Activated CD4-positive, alpha-beta memory T cell treated with anti-CD3 and anti-CD28 coated beads for 36 hours (primary cell): ENCODE measurements at regions of chr5 and their contacts with region 1.

Region 1: GRCh38 chr5:173238312-173239232 is 3.6 kb upstream of the NKX2-5 start:
- DNase-seq: no peak
- H3K4me3 Mint-ChIP-seq: peak overlapping the region; percentile 31
- H3K27ac Mint-ChIP-seq: no peak overlapping the region
- H3K4me1 Mint-ChIP-seq: peaks cover 41% of the 10 kb centered on the region
- H3K27me3 Mint-ChIP-seq: peaks cover 88% of the 10 kb centered on the region

Region 2: DNA sequence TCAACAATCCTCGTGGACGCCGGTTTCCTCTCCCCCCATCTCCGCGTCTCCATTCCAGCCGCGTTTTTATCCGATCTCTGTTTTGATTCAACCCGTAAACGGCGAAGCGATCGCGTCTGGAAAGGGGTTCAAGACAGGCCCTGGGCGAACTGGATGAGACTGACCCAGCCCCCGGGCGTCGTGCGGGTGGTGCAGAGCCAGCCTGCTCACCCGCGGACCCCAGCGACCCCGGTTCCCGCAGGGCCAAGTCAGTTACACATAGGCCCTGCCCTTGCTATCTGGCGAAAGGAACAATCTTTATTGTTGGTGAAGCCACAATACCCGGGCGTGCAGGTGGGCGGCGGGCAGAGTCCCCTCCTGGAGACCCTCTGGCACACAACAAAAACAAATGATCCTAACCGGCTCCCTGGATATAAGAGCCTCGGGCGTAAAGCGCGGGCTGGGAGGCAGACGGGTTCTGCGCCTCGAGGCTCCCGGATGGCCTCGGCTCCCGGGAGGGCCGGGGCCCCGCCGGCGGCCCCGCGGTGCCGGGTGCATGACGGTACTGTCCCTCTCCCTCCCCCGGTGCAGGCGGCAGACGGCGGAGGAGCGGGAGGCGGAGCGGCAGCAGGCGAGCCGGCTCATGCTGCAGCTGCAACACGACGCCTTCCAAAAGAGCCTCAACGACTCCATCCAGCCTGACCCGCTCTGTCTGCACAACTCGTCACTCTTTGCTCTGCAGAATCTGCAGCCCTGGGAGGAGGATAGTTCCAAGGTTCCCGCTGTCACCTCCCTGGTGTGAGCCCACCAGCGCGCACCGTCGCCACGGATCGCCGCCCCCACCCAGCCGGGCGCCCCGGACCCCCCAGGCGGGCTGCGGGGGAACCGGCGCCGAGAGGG is 1927.5 kb before region 1 on chr5:
- CTCF ChIA-PET with region 1: no interaction called
- POLR2A ChIA-PET with region 1: no interaction called
- intact Hi-C with region 1: loop called (anchors 5 kb)
- DNase-seq: no peak
- H3K4me3 Mint-ChIP-seq: no peak overlapping the region
- H3K27ac Mint-ChIP-seq: no peak overlapping the region
- H3K4me1 Mint-ChIP-seq: peaks cover 27% of the 10 kb centered on the region
- H3K27me3 Mint-ChIP-seq: peaks cover 66% of the 10 kb centered on the region

Region 3: GRCh38 chr5:173123416-173123815 is 115.2 kb before region 1 on chr5:
- CTCF ChIA-PET with region 1: no interaction called
- POLR2A ChIA-PET with region 1: no interaction called
- intact Hi-C with region 1: no loop called
- DNase-seq: no peak
- H3K4me3 Mint-ChIP-seq: no peak overlapping the region
- H3K27ac Mint-ChIP-seq: no peak overlapping the region
- H3K4me1 Mint-ChIP-seq: no peaks in the 10 kb centered on the region
- H3K27me3 Mint-ChIP-seq: no peaks in the 10 kb centered on the region

Region 4: GRCh38 chr5:173331956-173332479 is 93.4 kb after region 1 on chr5:
- CTCF ChIA-PET with region 1: interaction called, 3 read pairs
- POLR2A ChIA-PET with region 1: no interaction called
- intact Hi-C with region 1: loop called (anchors 2 kb)
- DNase-seq: peak; percentile 91
- H3K4me3 Mint-ChIP-seq: no peak overlapping the region
- H3K27ac Mint-ChIP-seq: no peak overlapping the region
- H3K4me1 Mint-ChIP-seq: peaks cover 22% of the 10 kb centered on the region
- H3K27me3 Mint-ChIP-seq: peaks cover 39% of the 10 kb centered on the region

Region 5: GRCh38 chr5:174735498-174736330 is 1497.1 kb after region 1 on chr5:
- CTCF ChIA-PET with region 1: no interaction called
- POLR2A ChIA-PET with region 1: no interaction called
- intact Hi-C with region 1: loop called (anchors 10 kb)
- DNase-seq: peak; percentile 37
- H3K4me3 Mint-ChIP-seq: no peak overlapping the region
- H3K27ac Mint-ChIP-seq: no peak overlapping the region
- H3K4me1 Mint-ChIP-seq: peaks cover 10% of the 10 kb centered on the region
- H3K27me3 Mint-ChIP-seq: peaks cover 66% of the 10 kb centered on the region